HEK293T (cell line): ENCODE measurements at regions of chr20 and their contacts with region 1.

Region 1: DNA sequence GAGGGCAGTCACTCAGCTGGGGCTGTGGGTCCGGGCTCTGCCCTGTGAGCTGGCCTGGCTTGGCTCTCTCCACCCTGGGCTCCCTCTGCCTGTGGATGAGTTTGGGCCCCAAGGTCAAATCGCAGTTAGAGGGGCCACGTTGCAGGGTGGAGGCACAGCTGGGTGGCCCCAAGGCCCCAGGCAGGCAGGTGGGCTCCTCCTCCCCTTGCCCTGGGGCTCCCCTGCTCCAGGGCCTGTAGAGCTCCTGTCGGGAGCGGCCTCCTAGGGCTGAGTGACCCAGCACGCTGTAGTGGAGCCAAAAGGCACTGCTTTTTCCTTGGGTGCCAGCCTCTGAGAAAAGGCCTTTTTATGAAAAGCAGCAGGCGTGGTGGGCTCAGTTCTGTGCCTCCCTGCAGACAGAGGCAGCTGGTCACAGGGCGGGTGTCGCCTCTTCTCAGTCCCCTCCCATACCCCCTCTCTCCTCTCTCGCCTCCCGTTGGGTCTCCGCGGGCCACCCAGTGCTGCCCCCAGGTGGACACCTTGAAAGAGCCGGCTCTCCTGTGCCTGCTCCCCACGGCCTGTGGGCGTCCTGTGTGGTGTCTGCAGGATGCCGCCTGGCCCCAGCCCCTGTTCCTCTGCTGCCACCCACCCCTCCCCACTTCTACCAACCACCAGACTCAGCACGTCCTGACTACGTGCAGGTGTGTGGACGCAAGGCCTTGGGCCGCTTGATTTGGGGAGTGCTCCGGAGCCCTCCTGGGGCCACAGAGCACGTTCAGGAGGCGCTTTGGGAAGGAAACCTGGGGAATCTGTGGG is 13.2 kb downstream of the SS18L1 start:
- DNase-seq: peak; percentile 84

Region 2: DNA sequence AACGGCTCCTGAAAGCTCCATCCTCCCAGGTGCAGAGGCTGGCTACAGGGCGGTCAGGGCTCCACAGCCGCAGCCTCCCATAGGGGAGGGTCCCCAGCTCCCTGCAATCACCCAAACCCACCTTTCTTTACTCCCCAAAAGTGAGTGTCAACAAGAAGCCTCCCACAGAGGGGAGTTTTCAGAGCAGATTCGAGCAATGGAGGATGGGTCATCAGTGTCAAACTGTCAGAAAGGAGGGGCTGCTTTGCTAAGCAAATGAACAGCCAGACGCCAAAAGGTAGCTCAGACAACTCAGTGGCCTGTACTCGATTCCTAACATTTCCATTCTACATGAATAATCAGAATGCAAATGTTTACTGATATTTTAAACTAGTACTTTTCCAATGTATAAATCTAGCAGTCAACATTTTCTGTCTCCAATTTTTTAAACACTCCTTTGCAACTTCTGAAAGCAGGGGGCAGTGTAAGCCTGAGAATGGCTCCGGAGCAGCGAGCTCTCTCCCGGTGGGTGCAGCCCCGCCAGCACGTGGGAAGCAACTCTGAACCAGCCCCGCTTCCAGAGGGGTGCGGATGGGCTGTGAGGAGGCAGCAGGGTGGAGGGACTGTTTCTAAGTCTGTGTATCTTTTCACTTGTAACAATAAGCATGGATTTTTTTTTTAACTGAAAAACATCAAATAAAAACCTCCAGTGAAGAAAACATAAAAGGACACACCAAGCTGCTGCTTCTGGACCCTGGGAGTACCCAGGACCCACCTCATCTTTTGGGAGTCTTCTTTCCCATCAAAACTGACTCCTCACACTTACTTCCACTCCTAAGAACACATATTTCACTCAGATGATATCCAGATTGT is 146.0 kb before region 1 on chr20:
- CTCF ChIA-PET with region 1: interaction called, 11 read pairs
- POLR2A ChIA-PET with region 1: no interaction called
- DNase-seq: peak; percentile 79

Region 3: GRCh38 chr20:62120990-62121775 is 35.6 kb before region 1 on chr20:
- CTCF ChIA-PET with region 1: no interaction called
- POLR2A ChIA-PET with region 1: no interaction called
- DNase-seq: no peak

Region 4: GRCh38 chr20:62174870-62175624 is 18.3 kb after region 1 on chr20:
- CTCF ChIA-PET with region 1: no interaction called
- POLR2A ChIA-PET with region 1: no interaction called
- DNase-seq: no peak